Right ventricle myocardium superior (tissue), 1 donor: ENCODE measurements at regions of chr5 and their contacts with region 1.

Region 1: DNA sequence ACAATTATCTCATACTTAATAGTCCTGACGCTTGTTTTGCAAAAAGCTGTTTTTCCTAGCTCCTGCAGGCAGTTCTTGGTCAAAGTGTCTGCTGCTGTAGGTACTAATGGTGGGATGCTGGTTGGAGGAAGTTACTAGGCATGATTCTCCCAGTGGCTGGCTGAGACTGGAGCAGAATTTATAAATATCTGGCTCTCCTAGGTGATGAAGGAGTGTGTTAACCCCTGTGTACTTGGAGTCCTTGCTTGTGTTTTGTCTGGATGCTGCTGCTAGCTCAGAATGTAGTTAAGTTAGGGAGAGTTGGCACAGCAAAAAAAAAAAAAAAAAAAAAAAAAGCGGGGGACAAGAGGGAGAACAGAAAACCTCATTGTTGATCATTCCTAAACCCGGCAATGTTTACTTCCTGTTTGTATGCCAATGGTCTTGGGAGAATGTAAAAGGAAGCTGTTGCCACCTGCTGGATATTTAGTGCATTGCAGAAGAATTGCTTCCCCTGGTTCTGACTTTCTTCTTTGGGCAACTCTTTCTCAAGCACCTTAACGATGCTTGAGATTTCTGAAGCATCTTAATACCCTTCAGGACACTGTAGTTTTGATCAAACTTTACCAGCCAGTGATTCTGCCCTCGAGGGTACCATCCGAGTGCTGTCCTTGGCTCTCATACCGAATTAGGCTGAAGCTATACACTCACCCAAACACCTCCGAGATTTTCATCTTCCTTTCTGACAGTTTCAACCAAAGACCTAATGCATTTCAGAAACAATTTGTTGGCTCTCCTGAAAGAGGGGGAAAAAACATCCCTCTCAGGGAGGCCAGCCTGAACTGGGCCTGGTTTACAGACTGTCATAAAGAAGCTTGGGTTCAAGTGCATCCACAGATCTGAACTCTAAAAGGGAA is 71.7 kb upstream of the WWC1 start:
- DNase-seq: no peak
- ATAC-seq: peak; percentile 73

Region 2: GRCh38 chr5:168123631-168124528 is 95.9 kb before region 1 on chr5:
- intact Hi-C with region 1: loop called (anchors 10 kb)
- DNase-seq: no peak
- ATAC-seq: no peak

Region 3: GRCh38 chr5:168295574-168296201 is 75.9 kb after region 1 on chr5:
- intact Hi-C with region 1: no loop called
- DNase-seq: no peak
- ATAC-seq: peak; percentile 59